Sigmoid colon (tissue), 7 donors: ENCODE measurements at regions of chr2 and their contacts with region 1.

Region 1: DNA sequence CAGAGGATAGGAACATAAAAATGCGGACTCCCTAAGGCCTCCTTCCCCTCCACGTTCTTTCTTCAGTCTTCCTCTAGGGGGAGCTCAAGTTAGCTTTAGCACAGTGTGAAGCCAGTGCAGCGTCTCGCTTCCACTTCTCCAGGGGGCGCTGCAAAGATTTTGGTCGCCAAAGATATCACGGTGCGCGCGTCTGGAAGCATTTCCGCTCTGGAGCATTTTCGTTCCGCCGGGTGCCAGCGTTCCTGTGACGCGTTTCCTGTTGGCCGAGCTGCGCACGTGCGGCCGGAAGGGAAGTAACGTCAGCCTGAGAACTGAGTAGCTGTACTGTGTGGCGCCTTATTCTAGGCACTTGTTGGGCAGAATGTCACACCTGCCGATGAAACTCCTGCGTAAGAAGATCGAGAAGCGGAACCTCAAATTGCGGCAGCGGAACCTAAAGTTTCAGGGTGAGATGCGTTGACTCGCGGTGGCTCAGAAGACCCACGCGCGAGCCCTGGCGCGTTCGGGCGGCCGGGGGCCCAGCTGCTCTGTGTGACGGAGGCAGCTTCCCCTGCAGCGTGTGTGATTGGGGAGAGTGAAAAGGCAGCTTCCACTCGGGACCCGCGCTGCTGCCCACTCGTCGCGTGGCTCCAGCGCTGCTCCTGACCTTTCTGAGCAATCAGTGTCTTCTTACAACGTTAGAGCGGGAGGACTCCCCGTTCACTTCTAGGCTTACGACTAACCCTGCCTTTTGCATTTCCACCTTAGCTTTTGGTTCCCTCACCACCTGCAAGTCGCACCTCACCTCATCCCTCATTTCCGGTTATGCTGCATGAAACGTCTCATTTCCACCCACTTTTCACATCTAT is at the start of gene DDX18:
- DNase-seq: peak; percentile 98
- H3K4me3 ChIP-seq: peak within 1 kb of the TSS; percentile 78 to 95 (median 83)
- H3K27ac ChIP-seq: peak within 1 kb of the TSS; percentile 87 to 90 (median 89)
- H3K4me1 ChIP-seq: peaks cover 0 to 19% (median 16%) of the 10 kb centered on the region in 4 donors
- H3K27me3 ChIP-seq: no peaks in the 10 kb centered on the region
- CTCF ChIP-seq: peak; percentile 97 to 99 (median 99)
- EP300 ChIP-seq: peak in 1 of 4 donors; percentile 57
- POLR2A ChIP-seq: peak; percentile 32 to 37
- total RNA-seq, gene DDX18: 33.0 to 41.0 (median 37.5) TPM

Region 2: DNA sequence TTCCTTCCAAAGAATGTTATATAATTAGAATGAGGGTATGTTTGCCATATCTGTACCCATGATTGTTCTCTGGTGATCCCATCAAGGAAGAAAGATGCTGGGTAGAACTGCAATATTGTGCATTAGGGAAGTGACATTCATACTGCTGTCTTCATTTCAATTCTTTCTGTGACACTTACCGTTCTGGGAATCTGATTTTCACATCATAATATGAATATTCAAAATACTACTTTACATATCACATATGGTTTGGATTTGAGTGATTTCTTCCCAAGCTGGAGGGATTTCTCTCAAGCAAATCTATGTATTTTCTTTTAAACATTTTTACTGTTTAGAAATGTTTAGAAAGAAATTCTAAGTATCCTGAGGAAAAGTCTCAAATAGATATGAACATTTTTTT is 168.5 kb before region 1 on chr2:
- intact Hi-C with region 1: no loop called
- DNase-seq: no peak
- H3K4me3 ChIP-seq: no peak overlapping the region
- H3K27ac ChIP-seq: no peak overlapping the region
- H3K4me1 ChIP-seq: no peaks in the 10 kb centered on the region
- H3K27me3 ChIP-seq: no peaks in the 10 kb centered on the region
- CTCF ChIP-seq: no peak
- EP300 ChIP-seq: no peak
- POLR2A ChIP-seq: no peak

Region 3: GRCh38 chr2:117714745-117715417 is 99.8 kb before region 1 on chr2:
- intact Hi-C with region 1: no loop called
- DNase-seq: no peak
- H3K4me3 ChIP-seq: no peak overlapping the region
- H3K27ac ChIP-seq: no peak overlapping the region
- H3K4me1 ChIP-seq: no peaks in the 10 kb centered on the region
- H3K27me3 ChIP-seq: no peaks in the 10 kb centered on the region
- CTCF ChIP-seq: no peak
- EP300 ChIP-seq: no peak
- POLR2A ChIP-seq: no peak

Region 4: GRCh38 chr2:118003396-118003824 is 188.8 kb after region 1 on chr2:
- intact Hi-C with region 1: loop called (anchors 5 kb)
- DNase-seq: peak; percentile 68
- H3K4me3 ChIP-seq: no peak overlapping the region
- H3K27ac ChIP-seq: peak overlapping the region in 2 of 4 donors; percentile 19 to 39
- H3K4me1 ChIP-seq: peaks cover 0 to 9% (median 6%) of the 10 kb centered on the region in 4 donors
- H3K27me3 ChIP-seq: no peaks in the 10 kb centered on the region
- CTCF ChIP-seq: peak; percentile 19 to 82 (median 70)
- EP300 ChIP-seq: no peak
- POLR2A ChIP-seq: no peak

Region 5: GRCh38 chr2:118088051-118089024 is 273.7 kb after region 1 on chr2 and contains the start of gene INSIG2:
- intact Hi-C with region 1: loop called (anchors 10 kb)
- DNase-seq: peak; percentile 94
- H3K4me3 ChIP-seq: peak within 1 kb of the TSS; percentile 59 to 90 (median 70)
- H3K27ac ChIP-seq: peak within 1 kb of the TSS; percentile 60 to 76 (median 65)
- H3K4me1 ChIP-seq: peaks cover 0 to 25% (median 18%) of the 10 kb centered on the region in 4 donors
- H3K27me3 ChIP-seq: no peaks in the 10 kb centered on the region
- CTCF ChIP-seq: peak in 1 of 4 experiments; percentile 13
- EP300 ChIP-seq: no peak
- POLR2A ChIP-seq: peak; percentile 37 to 68
- total RNA-seq, gene INSIG2: 15.2 to 20.7 (median 18.6) TPM

Region 6: GRCh38 chr2:119366649-119367471 is 1552.2 kb after region 1 on chr2 and contains the starts of genes C2orf76 and DBI:
- intact Hi-C with region 1: loop called (anchors 10 kb)
- DNase-seq: peak; percentile 97
- H3K4me3 ChIP-seq: peak within 1 kb of the TSS; percentile 55 to 79 (median 62)
- H3K27ac ChIP-seq: peak within 1 kb of the TSS; percentile 83 to 88 (median 87)
- H3K4me1 ChIP-seq: peaks cover 0 to 30% (median 26%) of the 10 kb centered on the region in 4 donors
- H3K27me3 ChIP-seq: no peaks in the 10 kb centered on the region
- CTCF ChIP-seq: no peak
- EP300 ChIP-seq: peak in 1 of 4 donors; percentile 84
- POLR2A ChIP-seq: peak; percentile 56 to 84
- total RNA-seq, gene C2orf76: 11.1 to 18.2 (median 16.9) TPM
- total RNA-seq, gene DBI: 49.5 to 92.4 (median 70.7) TPM